IMR-90 (cell line): ENCODE measurements at regions of chr9 and their contacts with region 1.

Region 1: GRCh38 chr9:34047864-34048672 is 619 bp downstream of the UBAP2 start:
- DNase-seq: no peak
- ATAC-seq: peak; percentile 2
- H3K4me3 ChIP-seq: peak overlapping the region; percentile 61
- H3K27ac ChIP-seq: peak overlapping the region; percentile 58
- H3K4me1 ChIP-seq: peaks cover 10% of the 10 kb centered on the region
- H3K27me3 ChIP-seq: no peaks in the 10 kb centered on the region
- CTCF ChIP-seq: no peak
- POLR2A ChIP-seq: no peak
- RAD21 ChIP-seq: no peak

Region 2: DNA sequence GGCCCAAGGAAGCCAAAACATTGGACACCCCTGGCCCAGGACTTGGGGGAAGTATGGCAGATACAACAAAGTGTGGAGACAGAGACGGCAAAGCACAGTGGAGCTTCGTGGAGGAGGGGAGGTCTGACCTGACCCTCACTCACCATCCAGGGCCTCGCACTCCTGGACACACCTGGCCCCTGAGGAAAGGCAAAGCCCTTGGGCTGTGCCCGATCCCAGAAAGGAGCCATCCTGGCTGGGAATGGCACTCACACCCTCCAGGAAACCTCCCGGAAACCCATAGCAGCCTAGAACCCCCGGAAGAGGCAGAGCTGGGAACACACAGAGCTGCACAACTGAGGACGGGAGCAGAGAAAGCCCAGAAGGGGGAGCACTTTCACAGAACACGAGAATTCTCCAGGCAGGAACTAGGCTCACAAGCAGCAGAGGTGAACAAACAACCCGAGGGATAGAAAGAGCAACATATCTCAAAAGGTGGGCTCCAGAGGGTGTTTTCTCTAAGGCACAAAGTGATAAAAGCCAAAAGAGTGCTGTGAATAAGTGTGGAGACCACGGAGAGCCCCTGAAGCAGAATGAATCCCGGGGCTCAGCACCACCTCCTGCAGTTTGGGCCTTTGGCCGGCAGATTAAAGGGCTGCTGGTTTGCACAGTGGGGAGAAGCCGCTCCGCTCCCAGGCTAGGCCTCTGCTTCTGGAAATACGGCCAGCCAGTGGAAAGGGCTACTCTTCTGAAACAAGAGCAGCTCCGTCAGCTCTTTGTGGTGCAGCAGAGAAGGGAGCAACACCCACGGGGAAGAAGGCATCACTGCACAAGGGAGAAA is 122.9 kb before region 1 on chr9:
- CTCF ChIA-PET with region 1: no interaction called
- POLR2A ChIA-PET with region 1: no interaction called
- dilution Hi-C with region 1: no loop called
- in situ Hi-C with region 1: no loop called
- intact Hi-C with region 1: no loop called
- DNase-seq: peak; percentile 54
- ATAC-seq: peak; percentile 80
- H3K4me3 ChIP-seq: no peak overlapping the region
- H3K27ac ChIP-seq: no peak overlapping the region
- H3K4me1 ChIP-seq: no peaks in the 10 kb centered on the region
- H3K27me3 ChIP-seq: no peaks in the 10 kb centered on the region
- CTCF ChIP-seq: peak; percentile 65
- POLR2A ChIP-seq: no peak
- RAD21 ChIP-seq: peak; percentile 60

Region 3: DNA sequence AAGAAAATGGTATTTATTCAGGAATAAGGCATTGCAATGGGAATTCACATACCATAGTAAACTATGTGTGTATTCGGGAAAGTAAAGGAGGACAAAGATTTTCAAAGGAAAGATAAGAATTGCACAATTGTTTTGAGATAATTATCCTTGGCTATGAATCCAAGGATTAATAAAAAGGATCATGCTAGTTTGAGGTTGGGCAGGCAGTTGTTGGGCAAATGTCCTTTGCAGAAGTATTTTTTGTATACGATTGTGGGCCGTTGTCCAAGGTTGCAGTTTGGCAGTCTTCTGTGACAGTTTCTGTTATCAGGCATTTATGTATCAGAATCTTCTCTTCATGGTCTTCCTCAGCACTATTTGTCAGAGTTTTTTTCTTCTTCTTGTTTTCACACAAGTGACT is 11.2 kb after region 1 on chr9:
- CTCF ChIA-PET with region 1: interaction called, 5 read pairs
- POLR2A ChIA-PET with region 1: interaction called, 13 read pairs
- dilution Hi-C with region 1: no loop called
- in situ Hi-C with region 1: no loop called
- intact Hi-C with region 1: no loop called
- DNase-seq: no peak
- ATAC-seq: peak; percentile 21; the same call in 1 of the 2 replicates
- H3K4me3 ChIP-seq: no peak overlapping the region
- H3K27ac ChIP-seq: no peak overlapping the region
- H3K4me1 ChIP-seq: no peaks in the 10 kb centered on the region
- H3K27me3 ChIP-seq: 0 out of 2 replicates have a peak, but pooled peaks cover 2% of the 10 kb centered on the region
- CTCF ChIP-seq: no peak
- POLR2A ChIP-seq: no peak
- RAD21 ChIP-seq: no peak